ENCODE measurements at regions of chr1 and their contacts with region 1.

Region 1: DNA sequence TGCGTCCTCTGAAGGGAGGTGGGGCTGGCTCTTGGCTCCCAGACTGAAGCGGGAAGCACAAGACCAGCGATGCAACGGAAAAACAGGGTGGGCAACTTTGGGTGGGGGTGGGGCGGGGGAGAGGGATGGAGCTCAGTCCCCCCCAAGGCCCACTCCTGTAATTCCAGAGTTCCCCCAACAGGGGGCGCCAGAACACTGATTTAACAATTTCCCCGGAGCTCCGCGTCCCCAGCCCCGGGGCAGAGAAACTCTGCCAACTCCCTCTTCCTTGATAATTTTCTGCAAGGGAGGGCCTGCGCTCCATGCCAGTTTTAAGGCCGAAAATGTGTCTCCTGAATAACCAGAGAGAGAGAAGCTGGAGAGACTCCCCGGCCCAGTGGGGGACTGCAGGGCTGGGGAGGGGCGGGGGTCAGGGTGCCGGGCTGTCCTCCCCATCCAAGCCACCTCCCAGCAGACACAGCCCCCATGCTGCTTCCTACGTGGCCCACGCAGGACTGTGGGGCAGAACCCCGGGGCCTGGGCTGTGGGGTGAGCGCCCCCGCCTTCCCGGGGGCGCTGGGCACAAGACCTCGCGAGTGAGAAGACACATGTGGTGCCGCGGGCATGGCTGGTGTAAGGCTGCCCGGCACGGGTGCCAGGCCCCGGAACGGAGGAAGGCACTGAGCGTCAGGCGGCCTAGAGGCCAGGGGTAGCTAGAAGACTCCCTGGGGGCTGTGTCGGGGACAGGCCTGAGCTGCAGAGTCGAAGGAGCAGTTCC is 51.4 kb downstream of the KIF21B start:
- DNase-seq: peak; percentile 43
- H3K4me3 Mint-ChIP-seq: no peak overlapping the region
- H3K27ac Mint-ChIP-seq: no peak overlapping the region
- H3K4me1 Mint-ChIP-seq: no peaks in the 10 kb centered on the region
- H3K27me3 Mint-ChIP-seq: no peaks in the 10 kb centered on the region

Region 2: DNA sequence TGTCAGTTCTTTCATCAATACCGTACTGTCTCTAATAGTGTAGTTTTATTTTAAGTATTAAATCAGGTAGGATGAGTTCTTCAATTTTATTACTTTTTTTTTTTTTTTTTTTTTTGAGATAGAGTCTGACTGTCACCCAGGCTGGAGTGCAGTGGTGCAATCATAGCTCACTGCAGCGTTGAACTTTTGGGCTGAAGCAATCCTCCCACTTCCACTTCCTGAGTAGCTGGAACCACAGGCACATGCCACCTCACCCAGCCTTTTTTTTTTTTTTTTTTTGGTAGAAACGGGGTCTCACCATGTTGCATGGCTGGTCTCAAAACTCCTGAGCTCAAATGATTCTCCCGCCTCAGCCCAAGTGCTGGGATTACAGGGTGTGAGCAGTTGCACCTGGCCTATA is 33.2 kb before region 1 on chr1:
- intact Hi-C with region 1: no loop called
- DNase-seq: no peak
- H3K4me3 Mint-ChIP-seq: no peak overlapping the region
- H3K27ac Mint-ChIP-seq: no peak overlapping the region
- H3K4me1 Mint-ChIP-seq: no peaks in the 10 kb centered on the region
- H3K27me3 Mint-ChIP-seq: peaks cover 14% of the 10 kb centered on the region

Region 3: DNA sequence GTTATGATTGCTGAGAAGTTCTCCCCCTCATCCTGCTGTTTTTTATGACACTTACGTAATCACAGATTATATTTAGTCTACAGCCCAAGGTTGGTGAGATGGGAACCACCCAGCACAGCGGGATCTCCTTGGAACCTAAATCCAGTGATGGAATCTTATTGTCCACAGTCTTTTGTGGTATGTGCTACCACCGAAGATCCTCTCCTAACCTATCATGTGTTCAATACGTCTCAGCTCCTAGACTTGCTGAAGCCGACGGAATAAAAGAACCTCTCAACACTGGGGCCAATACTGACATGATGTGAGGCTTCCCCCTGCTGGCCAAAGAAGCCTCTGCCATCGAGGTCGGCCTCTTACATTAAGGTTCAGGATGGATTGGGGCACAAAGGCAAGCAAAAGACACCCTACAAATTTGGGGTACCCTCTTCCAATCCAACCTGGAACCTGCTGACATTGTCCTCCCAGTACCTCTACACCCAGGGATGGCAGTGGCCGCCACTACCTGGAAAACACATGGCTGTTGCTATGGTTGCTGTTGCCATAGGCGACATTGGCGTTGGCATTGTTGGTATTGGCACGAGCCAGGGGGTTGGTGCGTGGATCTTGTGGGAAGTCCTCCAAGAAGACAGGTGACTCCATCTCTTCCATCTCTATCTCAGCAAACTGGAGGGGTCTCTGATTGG is 70.8 kb after region 1 on chr1:
- intact Hi-C with region 1: loop called (anchors 1 kb)
- DNase-seq: peak; percentile 53
- H3K4me3 Mint-ChIP-seq: no peak overlapping the region
- H3K27ac Mint-ChIP-seq: no peak overlapping the region
- H3K4me1 Mint-ChIP-seq: peaks cover 3% of the 10 kb centered on the region
- H3K27me3 Mint-ChIP-seq: peaks cover 11% of the 10 kb centered on the region

Region 4: GRCh38 chr1:201114236-201115131 is 142.4 kb after region 1 on chr1:
- intact Hi-C with region 1: loop called (anchors 2 kb)
- DNase-seq: peak; percentile 54
- H3K4me3 Mint-ChIP-seq: peak overlapping the region; percentile 80
- H3K27ac Mint-ChIP-seq: no peak overlapping the region
- H3K4me1 Mint-ChIP-seq: peaks cover 2% of the 10 kb centered on the region
- H3K27me3 Mint-ChIP-seq: peaks cover 43% of the 10 kb centered on the region

Measured in activated T-helper 2 cell treated with anti-CD3 and anti-CD28 coated beads, Interferon-gamma antibody, Interleukin-2, Interleukin-4, amounts not matched to agents 10 μg/mL and 5 μg/mL and 100 μg/mL, durations not matched to agents 14 hours and 24 hours and 36 hours (primary cell).